ENCODE measurements at regions of chr18 and their contacts with region 1.

Region 1: DNA sequence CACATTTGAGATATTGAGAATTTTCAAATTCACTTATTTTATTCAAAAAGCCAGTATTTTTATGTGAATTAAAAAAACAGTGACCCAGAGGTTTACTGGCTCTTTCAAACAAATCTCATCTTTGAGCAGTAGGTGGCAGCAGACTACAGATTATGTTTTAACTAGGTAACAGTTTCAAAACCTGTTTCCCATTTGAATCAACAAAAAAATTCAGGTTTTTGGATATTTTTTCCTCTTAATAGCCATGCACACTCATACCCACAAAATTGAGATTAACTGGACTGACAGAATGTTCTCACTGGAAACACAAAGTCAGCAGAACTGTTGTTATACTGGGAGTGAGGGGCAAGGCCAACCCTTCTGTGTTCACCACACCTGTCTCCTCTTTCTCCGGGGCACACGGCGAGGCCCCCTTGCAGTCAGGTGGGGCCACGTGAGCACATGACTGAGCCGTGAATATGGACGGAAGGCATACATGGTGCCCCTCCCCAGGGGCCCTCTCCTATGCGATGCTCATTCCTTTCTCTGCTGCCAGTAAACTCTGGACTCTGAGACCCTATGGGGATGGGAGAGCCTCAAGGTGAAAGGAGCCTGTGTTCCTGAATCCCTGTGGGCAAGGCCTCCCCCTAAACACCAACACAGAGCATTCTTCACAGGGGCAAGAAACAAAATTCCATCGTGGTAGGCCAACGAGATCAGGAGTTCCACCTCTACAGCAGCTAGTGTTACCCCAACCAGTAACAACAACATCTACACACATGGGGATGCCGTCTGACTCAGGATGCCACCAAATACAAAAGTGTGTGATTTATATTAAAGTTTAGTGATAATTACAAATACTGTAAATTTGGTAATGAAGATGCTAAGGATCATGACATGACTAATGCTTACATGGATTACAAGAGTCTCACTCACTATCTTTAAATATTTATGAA is 80.4 kb downstream of the LPIN2 start:
- DNase-seq: no peak
- ATAC-seq: peak; percentile 71

Region 2: DNA sequence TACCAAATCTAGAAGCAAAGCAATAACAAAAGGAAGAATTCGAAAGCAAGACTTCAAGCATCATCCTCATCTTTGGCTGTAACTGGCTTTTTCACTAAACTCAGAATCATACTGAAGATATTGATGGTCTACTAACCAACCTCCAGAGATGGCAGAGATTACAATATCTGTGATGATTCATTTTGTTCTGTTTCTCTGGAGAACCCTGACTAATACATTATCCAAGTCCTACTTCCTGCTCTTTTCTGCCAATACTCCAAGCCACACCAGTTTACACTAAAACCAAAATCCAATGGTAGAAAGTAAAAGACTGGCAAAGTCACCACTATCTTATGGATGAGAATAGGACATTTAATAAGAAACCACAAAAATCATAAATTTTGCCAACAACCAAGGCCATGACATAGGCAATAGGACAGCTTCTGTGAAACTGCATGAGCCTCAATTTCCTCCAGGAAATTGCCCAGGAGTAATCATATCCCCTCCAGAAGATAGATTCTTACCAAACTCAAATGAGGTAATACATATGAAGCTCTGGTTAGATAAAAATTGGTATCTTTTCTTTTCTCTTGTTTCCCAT is 521.0 kb before region 1 on chr18:
- intact Hi-C with region 1: no loop called
- DNase-seq: no peak
- ATAC-seq: no peak

Region 3: GRCh38 chr18:2827061-2827460 is 105.5 kb before region 1 on chr18:
- intact Hi-C with region 1: no loop called
- DNase-seq: no peak
- ATAC-seq: peak; percentile 20

Region 4: DNA sequence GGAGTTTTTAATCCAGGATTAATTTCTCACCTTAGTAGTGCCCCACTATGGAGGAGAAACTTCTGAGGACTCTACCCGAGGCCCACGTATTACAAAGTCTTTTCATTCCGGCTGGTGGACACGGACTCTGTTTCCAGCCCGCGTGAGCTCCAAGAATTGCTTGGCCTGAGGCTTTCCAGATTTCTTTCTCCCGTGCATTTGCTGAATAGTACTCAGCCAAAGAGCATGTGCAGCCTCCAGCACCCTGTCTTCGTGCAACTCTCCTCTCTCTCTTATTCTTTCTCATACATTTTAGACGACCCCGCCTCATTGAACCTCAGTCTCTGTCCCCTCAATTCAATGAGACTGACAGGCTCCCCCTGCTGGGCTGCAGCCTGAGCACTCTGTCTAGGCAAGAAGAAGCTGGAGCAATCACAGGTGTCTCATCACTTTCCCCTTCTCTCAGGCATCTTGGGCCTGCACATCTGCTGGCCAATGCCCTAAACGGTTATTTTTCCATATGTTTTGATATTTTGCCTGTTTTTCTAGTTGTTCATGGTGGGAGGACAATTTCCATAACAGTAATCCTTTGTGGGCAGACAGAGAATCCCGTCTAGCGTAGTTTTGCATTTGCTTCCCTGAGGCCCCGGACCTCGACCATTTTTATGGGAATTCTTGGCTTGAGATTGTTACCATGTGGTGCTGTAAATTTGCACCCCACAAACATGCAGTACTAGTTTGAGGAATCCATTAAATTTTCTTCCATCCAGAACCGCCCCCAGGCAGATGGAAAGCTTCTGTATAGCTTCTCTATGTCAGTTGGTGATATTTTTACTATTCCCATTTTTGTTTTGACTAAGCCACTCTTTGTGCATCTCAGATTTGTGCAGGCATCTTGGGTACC is 130.5 kb after region 1 on chr18:
- intact Hi-C with region 1: loop called (anchors 5 kb)
- DNase-seq: peak; percentile 85
- ATAC-seq: peak; percentile 74

Region 5: DNA sequence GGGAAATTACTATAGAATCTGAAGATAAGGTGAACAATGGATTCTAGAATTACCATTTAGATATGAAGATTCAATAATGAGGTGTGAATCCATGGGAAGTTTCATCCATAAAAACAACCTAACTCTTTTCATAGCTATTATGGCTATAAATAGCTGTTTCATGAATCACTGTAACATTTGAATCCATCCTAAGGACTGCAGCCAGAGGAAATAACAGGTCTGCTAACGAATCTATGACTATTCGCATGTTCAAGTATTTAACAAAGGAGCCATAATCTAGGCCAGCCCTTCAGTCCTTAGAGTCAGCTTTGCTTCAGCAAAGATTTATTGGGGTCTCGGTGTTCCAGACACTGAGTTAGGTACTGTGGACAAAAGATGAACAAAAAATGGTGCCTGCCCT is 200.2 kb after region 1 on chr18:
- intact Hi-C with region 1: loop called (anchors 5 kb)
- DNase-seq: no peak
- ATAC-seq: no peak

Region 6: GRCh38 chr18:3245853-3246634 is 313.5 kb after region 1 on chr18:
- intact Hi-C with region 1: loop called (anchors 10 kb)
- DNase-seq: peak; percentile 93
- ATAC-seq: peak; percentile 81